Activated T-helper 2 cell treated with anti-CD3 and anti-CD28 coated beads, Interferon-gamma antibody, Interleukin-2, Interleukin-4, amounts not matched to agents 10 μg/mL and 5 μg/mL and 100 μg/mL, durations not matched to agents 14 hours and 24 hours and 36 hours (primary cell): ENCODE measurements at regions of chrX and their contacts with region 1.

Region 1: DNA sequence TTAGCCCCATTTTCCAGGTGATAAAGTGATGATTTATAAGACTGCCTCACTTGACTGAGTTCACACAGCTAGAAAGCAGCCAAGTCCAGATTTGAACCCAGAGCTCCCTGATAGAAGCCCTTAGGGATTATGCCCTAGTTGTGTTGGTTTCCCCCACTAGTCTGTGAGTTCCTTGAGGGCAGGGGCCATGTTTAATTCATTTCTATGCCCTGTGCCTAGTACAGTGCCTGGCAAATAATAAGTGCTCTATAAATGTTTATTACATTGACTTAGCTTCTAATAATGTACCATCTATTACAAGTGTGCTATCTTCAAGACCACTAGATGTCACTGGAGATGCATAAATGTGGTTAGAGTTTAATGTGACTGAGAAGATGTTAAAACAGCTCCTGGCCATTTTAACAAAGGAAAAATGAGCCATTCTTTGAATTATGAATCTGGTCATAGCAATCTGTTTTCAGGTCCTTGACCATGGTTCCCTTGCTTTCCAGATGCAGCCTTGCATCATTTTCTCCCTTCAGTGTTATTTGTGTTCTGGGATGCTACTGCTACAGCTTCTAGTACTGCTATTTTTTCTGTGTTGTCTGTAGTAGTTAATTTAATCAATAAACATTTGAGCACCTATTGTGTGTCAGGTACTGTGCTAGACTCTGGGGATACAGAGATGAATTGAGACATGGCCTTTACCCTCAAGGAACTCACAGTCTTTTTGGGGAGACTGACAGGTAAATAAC is 43.2 kb downstream of the SLC9A6 start:
- DNase-seq: no peak
- H3K4me3 Mint-ChIP-seq: no peak overlapping the region
- H3K27ac Mint-ChIP-seq: no peak overlapping the region
- H3K4me1 Mint-ChIP-seq: peaks cover 2% of the 10 kb centered on the region
- H3K27me3 Mint-ChIP-seq: no peaks in the 10 kb centered on the region

Region 2: GRCh38 chrX:136162831-136163570 is 134.6 kb after region 1 on chrX:
- intact Hi-C with region 1: loop called (anchors 1 kb)
- DNase-seq: peak; percentile 15
- H3K4me3 Mint-ChIP-seq: no peak overlapping the region
- H3K27ac Mint-ChIP-seq: no peak overlapping the region
- H3K4me1 Mint-ChIP-seq: peaks cover 2% of the 10 kb centered on the region
- H3K27me3 Mint-ChIP-seq: no peaks in the 10 kb centered on the region

Region 3: DNA sequence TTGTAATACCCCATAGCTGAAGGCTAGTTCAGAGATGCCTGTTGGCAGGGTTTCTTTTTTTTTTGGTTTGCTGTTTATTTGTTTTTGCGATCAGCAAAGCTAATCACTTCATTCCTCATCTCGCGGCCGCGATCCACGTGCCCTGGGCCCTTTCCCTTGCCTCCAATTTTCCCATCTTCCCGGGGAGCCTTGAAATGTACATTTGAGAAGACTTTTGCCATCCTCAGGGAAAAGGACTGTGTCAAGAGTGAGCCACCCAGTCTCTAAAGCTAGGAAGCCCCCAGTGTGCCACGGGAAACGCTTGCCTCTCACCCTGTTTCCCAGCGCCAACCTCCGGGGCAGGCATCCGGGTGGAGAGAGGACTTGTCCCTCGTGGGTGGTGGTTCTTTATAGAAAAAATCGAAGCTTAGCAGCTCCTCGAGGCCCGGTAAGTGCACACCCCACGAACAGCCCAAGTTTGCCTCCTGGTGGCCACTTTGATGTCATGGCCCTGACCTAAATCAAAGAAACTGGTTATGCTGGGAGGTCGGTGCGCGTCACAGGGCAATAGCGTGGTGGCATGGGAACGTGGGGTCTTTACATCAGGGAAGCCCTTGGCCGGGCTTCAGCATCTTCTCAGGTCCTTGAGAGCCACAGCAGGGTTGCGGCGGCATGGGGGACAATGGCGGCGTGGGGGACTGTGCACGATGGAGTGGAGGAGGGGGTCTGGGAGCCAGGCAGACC is 180.8 kb after region 1 on chrX:
- intact Hi-C with region 1: loop called (anchors 10 kb)
- DNase-seq: no peak
- H3K4me3 Mint-ChIP-seq: no peak overlapping the region
- H3K27ac Mint-ChIP-seq: no peak overlapping the region
- H3K4me1 Mint-ChIP-seq: peaks cover 11% of the 10 kb centered on the region
- H3K27me3 Mint-ChIP-seq: no peaks in the 10 kb centered on the region

Region 4: DNA sequence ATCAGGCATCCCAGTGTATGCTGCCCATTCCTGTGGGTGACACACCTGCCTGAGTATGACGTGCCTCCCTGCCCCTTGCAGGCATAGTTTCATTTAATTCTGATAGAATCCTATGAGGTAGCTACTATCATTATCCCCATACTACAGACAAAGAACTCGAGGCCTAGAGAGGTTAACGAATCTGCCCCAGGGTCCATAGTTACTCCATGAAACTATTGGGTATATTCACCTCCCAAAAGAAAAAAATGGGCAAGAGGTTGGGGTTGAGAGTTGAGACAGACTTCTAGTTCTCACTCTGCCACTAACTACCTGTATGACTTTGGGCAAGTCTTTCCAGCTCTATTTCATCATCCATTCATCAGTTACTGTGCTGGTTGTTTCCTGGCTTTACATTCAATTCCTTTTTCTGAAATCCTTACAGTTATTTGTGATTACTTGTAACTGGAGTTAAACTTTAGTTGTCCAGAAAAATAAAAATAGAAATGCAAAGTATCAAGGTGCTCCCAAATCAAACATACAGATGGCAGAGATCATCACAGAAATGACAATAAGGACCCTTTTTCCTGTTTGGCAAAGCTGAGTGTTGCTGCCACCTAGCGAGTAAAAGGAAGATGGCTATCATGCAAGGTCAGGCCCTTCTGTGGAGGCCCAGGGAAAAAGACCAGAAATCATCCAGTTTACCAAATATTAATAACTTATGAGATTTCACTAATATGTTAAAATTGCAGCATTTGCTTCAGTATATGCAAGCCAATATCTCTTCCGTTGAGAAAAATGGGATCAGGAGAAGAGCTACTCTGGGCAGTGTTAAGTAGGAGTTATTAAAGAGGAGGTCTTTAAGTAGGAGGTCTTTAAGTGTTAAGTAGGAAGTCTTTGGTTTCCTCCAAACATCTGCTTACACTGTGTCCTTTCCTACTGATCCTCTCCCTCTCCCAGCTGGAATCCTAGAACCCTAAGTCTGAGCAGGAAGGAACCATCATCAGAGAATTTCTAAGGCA is 239.9 kb after region 1 on chrX:
- intact Hi-C with region 1: loop called (anchors 5 kb)
- DNase-seq: peak; percentile 9
- H3K4me3 Mint-ChIP-seq: no peak overlapping the region
- H3K27ac Mint-ChIP-seq: no peak overlapping the region
- H3K4me1 Mint-ChIP-seq: peaks cover 3% of the 10 kb centered on the region
- H3K27me3 Mint-ChIP-seq: no peaks in the 10 kb centered on the region